Right cardiac atrium (tissue), 5 donors: ENCODE measurements at regions of chr5 and their contacts with region 1.

Region 1: GRCh38 chr5:180848878-180849277 is 12.2 kb downstream of the ZFP62 start:
- DNase-seq: no peak
- ATAC-seq: no peak
- H3K4me3 ChIP-seq: no peak overlapping the region
- H3K27ac ChIP-seq: no peak overlapping the region
- H3K4me1 ChIP-seq: no peaks in the 10 kb centered on the region
- H3K27me3 ChIP-seq: no peaks in the 10 kb centered on the region

Region 2: DNA sequence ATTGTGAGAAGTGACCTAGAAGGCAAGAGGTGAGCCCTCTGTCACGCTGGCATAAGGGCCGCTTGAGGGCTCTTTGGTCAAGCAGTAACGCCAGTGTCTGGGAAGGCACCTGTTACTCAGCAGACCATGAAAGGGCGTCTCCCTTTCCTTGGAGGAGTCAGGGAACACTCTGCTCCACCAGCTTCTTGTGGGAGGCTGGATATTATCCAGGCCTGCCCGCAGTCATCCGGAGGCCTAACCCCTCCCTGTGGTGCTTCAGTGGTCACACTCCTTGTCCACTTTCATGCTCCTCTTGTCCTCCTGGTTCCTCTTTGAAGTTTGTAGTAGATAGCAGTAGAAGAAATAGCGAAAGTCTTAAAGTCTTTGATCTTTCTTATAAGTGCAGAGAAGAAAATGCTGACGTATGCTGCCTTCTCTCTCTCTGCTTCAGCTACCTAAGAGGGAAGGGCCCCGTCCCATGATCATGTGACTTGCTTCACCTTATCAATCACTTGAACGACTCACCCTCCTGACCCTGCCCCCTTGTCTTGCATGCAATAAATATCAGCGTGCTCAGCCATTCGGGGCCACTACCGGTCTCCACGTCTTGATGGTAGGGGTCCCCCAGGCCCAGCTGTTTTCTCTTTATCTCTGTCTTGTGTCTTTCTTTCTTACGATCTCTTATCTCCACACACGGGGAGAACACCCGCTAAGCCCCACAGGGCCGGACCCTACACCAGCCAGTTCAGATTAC is 240.9 kb before region 1 on chr5:
- intact Hi-C with region 1: no loop called
- DNase-seq: peak in 1 of 3 donors; percentile 21
- ATAC-seq: no peak
- H3K4me3 ChIP-seq: no peak overlapping the region
- H3K27ac ChIP-seq: no peak overlapping the region
- H3K4me1 ChIP-seq: no peaks in the 10 kb centered on the region
- H3K27me3 ChIP-seq: no peaks in the 10 kb centered on the region

Region 3: DNA sequence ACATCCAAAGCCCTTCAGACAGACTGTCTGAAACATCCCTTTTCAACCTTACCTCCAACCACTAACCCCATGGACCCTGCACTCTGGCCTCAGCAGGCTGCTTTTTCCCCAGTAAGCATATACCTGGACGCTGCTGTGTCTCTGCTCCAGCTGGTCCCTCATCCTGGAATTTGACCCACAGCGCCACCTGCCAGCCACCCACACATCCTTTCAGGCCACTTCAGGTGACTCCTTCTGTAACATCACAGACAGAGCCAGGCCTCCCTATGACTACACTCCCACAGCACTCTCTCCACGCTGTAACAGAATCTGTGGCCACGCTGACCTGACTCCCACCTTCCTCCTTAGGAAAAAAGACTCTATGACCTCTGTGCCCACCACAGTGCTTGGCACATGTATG is 49.7 kb before region 1 on chr5:
- intact Hi-C with region 1: loop called in 2 of 4 experiments (anchors 10 kb)
- DNase-seq: no peak
- ATAC-seq: no peak
- H3K4me3 ChIP-seq: no peak overlapping the region
- H3K27ac ChIP-seq: no peak overlapping the region
- H3K4me1 ChIP-seq: peaks cover 40% of the 10 kb centered on the region
- H3K27me3 ChIP-seq: no peaks in the 10 kb centered on the region

Region 4: GRCh38 chr5:180809403-180810209 is 39.3 kb before region 1 on chr5:
- intact Hi-C with region 1: loop called in 1 of 4 experiments (anchors 10 kb)
- DNase-seq: peak in 2 of 3 donors; percentile 81 to 97
- ATAC-seq: peak; percentile 94 to 95
- H3K4me3 ChIP-seq: peak overlapping the region; percentile 70
- H3K27ac ChIP-seq: peak overlapping the region; percentile 91
- H3K4me1 ChIP-seq: peaks cover 18% of the 10 kb centered on the region
- H3K27me3 ChIP-seq: no peaks in the 10 kb centered on the region